Left cardiac atrium (tissue), 4 donors: ENCODE measurements at regions of chr4 and their contacts with region 1.

Region 1: DNA sequence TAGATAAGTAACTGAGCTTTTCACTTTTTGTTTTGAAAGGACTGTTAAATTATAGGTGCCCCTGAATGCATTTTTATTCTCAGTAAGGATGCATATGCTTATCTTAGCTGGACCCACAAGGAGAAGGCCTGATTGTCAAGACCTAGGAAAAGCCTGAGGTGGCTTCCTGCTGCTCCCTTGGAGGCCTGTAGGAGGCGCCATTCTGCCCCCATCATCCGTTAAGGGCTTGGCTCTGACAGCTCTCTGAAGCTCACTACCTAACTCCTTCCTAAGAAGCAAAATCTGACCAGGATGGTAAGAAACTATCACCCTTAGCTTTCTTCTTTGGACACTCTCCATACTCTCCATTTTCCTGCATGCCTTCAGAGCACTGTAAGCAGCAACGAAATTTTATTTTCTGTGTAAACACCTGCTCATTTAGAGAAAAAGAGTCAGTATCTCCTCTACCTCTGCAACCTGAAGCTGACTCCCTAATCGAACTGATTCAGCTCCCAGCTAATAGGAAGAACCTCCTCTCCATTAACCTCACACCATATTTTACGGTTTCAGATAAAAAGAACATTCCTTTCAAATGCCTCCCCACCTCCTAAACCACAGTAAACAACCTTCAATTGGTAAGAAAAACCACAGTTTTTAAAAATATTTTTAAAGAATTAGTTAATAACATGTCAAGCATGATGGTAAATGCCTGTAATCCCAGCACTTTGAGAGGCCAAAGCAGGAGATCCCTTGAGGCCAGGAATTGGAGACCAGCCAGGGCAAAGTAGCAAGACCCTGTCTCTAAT is 73.4 kb upstream of the EDNRA start:
- DNase-seq: no peak
- ATAC-seq: no peak

Region 2: DNA sequence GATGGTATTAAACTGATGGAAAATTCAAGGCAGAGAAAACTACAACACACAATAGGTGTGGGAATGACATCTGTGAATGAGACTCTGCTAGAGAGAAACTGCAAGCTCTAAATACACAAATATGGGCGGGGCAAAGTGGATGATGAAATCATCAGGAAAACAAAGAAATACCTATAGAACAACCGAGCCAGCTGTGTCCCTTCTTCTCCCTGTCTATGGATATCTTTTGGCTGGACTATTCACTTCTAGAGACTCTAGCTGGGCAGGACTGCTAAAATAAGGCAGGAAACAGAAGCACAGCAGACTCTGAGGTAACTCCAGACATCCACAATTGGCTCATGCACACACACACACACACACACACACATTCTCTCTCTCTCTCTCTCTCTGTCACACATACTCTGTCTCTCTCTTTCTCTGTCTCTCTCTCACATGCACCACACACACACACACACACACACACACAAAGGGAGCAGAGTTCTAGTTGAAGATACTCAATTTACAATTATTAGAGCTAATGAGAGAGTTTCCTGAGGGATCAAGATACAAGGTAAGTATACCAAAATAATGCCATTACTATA is 46.2 kb after region 1 on chr4:
- intact Hi-C with region 1: loop called in 1 of 2 experiments (anchors 10 kb)
- DNase-seq: no peak
- ATAC-seq: no peak

Region 3: GRCh38 chr4:147550626-147551250 is 143.3 kb after region 1 on chr4:
- intact Hi-C with region 1: no loop called
- DNase-seq: no peak
- ATAC-seq: peak; percentile 59 to 60